Mammary epithelial cell (primary cell): ENCODE measurements at regions of chr11 and their contacts with region 1.

Region 1: GRCh38 chr11:102293873-102294601 is 23.2 kb upstream of the BIRC3 start:
- DNase-seq: peak; percentile 50
- H3K4me3 ChIP-seq: no peak overlapping the region
- H3K27ac ChIP-seq: no peak overlapping the region
- H3K4me1 ChIP-seq: peaks cover 7% of the 10 kb centered on the region
- H3K27me3 ChIP-seq: no peaks in the 10 kb centered on the region
- CTCF ChIP-seq: peak; percentile 80 to 87

Region 2: DNA sequence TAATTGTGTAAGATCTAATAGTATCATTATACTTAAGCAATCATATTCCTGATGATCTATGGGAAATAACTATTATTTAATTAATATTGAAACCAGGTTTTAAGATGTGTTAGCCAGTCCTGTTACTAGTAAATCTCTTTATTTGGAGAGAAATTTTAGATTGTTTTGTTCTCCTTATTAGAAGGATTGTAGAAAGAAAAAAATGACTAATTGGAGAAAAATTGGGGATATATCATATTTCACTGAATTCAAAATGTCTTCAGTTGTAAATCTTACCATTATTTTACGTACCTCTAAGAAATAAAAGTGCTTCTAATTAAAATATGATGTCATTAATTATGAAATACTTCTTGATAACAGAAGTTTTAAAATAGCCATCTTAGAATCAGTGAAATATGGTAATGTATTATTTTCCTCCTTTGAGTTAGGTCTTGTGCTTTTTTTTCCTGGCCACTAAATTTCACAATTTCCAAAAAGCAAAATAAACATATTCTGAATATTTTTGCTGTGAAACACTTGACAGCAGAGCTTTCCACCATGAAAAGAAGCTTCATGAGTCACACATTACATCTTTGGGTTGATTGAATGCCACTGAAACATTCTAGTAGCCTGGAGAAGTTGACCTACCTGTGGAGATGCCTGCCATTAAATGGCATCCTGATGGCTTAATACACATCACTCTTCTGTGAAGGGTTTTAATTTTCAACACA is 29.7 kb after region 1 on chr11:
- CTCF ChIA-PET with region 1: no interaction called
- dilution Hi-C with region 1: no loop called
- in situ Hi-C with region 1: no loop called
- intact Hi-C with region 1: no loop called
- DNase-seq: peak; percentile 57
- H3K4me3 ChIP-seq: no peak overlapping the region
- H3K27ac ChIP-seq: no peak overlapping the region
- H3K4me1 ChIP-seq: peaks cover 10% of the 10 kb centered on the region
- H3K27me3 ChIP-seq: no peaks in the 10 kb centered on the region
- CTCF ChIP-seq: no peak

Region 3: DNA sequence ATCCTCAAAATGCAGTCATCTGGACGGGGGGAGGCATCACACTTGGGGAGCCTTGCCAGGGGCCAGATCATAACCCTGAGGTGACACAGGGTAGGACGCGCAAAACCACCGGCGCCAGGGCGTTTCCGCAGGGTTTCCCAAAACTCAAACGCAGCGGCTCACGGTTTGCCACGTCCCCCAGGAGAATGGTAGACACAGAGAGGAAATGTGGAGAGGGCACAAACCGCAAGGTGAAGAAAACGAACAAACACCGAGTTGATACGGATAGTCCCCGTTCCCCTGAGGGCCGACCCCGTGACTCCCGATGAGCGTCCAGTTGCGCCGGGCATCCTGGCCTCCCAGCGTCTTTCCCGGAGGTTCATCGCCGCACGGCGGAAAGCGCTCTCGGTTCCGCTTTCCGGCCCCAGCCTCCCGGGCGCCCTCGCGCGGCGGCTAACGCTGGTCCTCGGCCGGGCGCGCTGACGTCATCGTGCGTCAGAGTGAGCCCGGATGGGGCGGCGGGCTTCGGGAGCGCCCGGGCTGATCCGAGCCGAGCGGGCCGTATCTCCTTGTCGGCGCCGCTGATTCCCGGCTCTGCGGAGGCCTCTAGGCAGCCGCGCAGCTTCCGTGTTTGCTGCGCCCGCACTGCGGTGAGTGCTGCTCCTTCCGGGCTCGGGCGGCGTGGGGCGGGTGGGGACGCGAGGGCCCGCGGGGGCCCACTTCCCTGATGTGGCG is 52.9 kb after region 1 on chr11 and contains the start of gene BIRC2:
- CTCF ChIA-PET with region 1: no interaction called
- dilution Hi-C with region 1: no loop called
- in situ Hi-C with region 1: loop called in 1 of 2 experiments (anchors 10 kb)
- intact Hi-C with region 1: loop called (anchors 1 kb)
- DNase-seq: peak; percentile 94
- H3K4me3 ChIP-seq: peak within 1 kb of the TSS; percentile 65 to 81 (median 80)
- H3K27ac ChIP-seq: peak within 1 kb of the TSS; percentile 88
- H3K4me1 ChIP-seq: peaks cover 23% of the 10 kb centered on the region
- H3K27me3 ChIP-seq: no peaks in the 10 kb centered on the region
- CTCF ChIP-seq: peak; percentile 52 to 83
- total RNA-seq, gene BIRC2: 59.4 to 78.2 TPM